T-cell (primary cell): ENCODE measurements at regions of chr3 and their contacts with region 1.

Region 1: GRCh38 chr3:11047500-11047899 is 55.0 kb downstream of the SLC6A1 start:
- DNase-seq: no peak
- ATAC-seq: no peak
- H3K4me3 ChIP-seq: no peak overlapping the region
- H3K4me3 Mint-ChIP-seq: no peak overlapping the region
- H3K27ac ChIP-seq: no peak overlapping the region
- H3K27ac Mint-ChIP-seq: no peak overlapping the region
- H3K4me1 ChIP-seq: no peaks in the 10 kb centered on the region
- H3K4me1 Mint-ChIP-seq: no peaks in the 10 kb centered on the region
- H3K27me3 ChIP-seq: peaks cover 0 to 15% of the 10 kb centered on the region in 2 experiments
- H3K27me3 Mint-ChIP-seq: peaks cover 6 to 13% of the 10 kb centered on the region in 2 donors

Region 2: GRCh38 chr3:11072631-11073030 is 25.1 kb after region 1 on chr3:
- CTCF ChIA-PET with region 1: no interaction called
- POLR2A ChIA-PET with region 1: interaction called in 1 of 2 experiments, 12 read pairs
- DNase-seq: no peak
- ATAC-seq: no peak
- H3K4me3 ChIP-seq: no peak overlapping the region
- H3K4me3 Mint-ChIP-seq: no peak overlapping the region
- H3K27ac ChIP-seq: no peak overlapping the region
- H3K27ac Mint-ChIP-seq: no peak overlapping the region
- H3K4me1 ChIP-seq: no peaks in the 10 kb centered on the region
- H3K4me1 Mint-ChIP-seq: no peaks in the 10 kb centered on the region
- H3K27me3 ChIP-seq: peaks cover 0 to 20% of the 10 kb centered on the region in 2 experiments
- H3K27me3 Mint-ChIP-seq: peaks cover 26 to 27% of the 10 kb centered on the region in 2 donors